ENCODE measurements at regions of chr2 and their contacts with region 1.

Region 1: GRCh38 chr2:60756191-60757041 is at the start of gene PAPOLG:
- DNase-seq: peak; percentile 90
- ATAC-seq: peak; percentile 97
- H3K4me3 ChIP-seq: peak within 1 kb of the TSS; percentile 83 to 100 (median 96)
- H3K27ac ChIP-seq: peak within 1 kb of the TSS; percentile 78
- H3K4me1 ChIP-seq: peaks cover 29% of the 10 kb centered on the region
- H3K27me3 ChIP-seq: no peaks in the 10 kb centered on the region; a peak in 1 of 5 replicates
- CTCF ChIP-seq: no peak
- EP300 ChIP-seq: no peak
- POLR2A ChIP-seq: peak; percentile 87 to 95
- RAD21 ChIP-seq: no peak
- total RNA-seq, gene PAPOLG: 10.4 and 16.2 TPM in 2 replicates

Region 2: GRCh38 chr2:60707750-60708371 is 48.6 kb before region 1 on chr2:
- CTCF ChIA-PET with region 1: no interaction called
- POLR2A ChIA-PET with region 1: no interaction called
- in situ Hi-C with region 1: no loop called
- intact Hi-C with region 1: loop called (anchors 2 kb)
- DNase-seq: peak; percentile 49
- ATAC-seq: peak; percentile 77
- H3K4me3 ChIP-seq: no peak overlapping the region; a peak in 1 of 6 replicates
- H3K27ac ChIP-seq: no peak overlapping the region
- H3K4me1 ChIP-seq: peaks cover 6% of the 10 kb centered on the region
- H3K27me3 ChIP-seq: peaks cover 1 to 5% of the 10 kb centered on the region in 2 experiments; a peak in 1 of 5 replicates
- CTCF ChIP-seq: peak; percentile 68
- EP300 ChIP-seq: no peak
- POLR2A ChIP-seq: no peak
- RAD21 ChIP-seq: peak; percentile 55

Region 3: DNA sequence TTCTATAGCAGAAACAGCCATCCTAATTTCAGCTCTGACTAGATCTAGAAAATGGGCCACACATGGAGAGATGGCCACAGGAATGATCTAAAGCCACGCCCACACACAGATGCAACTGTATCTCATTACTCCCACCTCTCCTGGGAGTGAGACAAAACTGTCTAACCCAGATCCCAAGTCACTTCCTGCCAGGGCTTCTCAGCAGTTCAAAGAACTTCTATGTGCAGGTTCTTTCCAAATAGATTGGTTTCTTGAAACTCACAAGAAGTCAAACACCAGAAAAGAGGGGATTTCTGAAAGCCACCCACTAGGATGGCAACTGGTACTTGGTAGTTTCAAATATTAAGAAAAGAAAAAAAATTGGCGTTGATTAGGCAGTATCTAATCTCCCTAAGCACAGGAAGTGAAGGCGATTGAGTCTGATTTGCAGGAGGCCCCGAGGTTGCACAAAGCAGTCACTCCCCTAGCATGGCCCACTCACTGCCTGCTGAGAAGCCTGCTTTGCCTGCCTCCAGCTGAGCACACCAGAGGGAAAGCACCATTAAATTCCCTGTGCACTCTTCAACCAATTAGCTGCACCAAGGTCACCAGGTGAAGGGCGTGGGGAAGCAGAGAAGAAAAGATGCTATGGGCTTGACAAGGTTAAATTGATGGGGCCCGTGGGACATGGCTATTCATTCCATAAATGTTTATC is 50.7 kb after region 1 on chr2:
- CTCF ChIA-PET with region 1: no interaction called
- POLR2A ChIA-PET with region 1: no interaction called
- in situ Hi-C with region 1: no loop called
- intact Hi-C with region 1: no loop called
- DNase-seq: no peak
- ATAC-seq: peak; percentile 28
- H3K4me3 ChIP-seq: no peak overlapping the region
- H3K27ac ChIP-seq: no peak overlapping the region
- H3K4me1 ChIP-seq: peaks cover 35% of the 10 kb centered on the region
- H3K27me3 ChIP-seq: peaks cover 0 to 2% of the 10 kb centered on the region in 2 experiments; a peak in 1 of 5 replicates
- CTCF ChIP-seq: no peak
- EP300 ChIP-seq: no peak
- POLR2A ChIP-seq: no peak
- RAD21 ChIP-seq: no peak

Measured in HepG2 (cell line).